HepG2 (cell line): ENCODE measurements at regions of chr9 and their contacts with region 1.

Region 1: DNA sequence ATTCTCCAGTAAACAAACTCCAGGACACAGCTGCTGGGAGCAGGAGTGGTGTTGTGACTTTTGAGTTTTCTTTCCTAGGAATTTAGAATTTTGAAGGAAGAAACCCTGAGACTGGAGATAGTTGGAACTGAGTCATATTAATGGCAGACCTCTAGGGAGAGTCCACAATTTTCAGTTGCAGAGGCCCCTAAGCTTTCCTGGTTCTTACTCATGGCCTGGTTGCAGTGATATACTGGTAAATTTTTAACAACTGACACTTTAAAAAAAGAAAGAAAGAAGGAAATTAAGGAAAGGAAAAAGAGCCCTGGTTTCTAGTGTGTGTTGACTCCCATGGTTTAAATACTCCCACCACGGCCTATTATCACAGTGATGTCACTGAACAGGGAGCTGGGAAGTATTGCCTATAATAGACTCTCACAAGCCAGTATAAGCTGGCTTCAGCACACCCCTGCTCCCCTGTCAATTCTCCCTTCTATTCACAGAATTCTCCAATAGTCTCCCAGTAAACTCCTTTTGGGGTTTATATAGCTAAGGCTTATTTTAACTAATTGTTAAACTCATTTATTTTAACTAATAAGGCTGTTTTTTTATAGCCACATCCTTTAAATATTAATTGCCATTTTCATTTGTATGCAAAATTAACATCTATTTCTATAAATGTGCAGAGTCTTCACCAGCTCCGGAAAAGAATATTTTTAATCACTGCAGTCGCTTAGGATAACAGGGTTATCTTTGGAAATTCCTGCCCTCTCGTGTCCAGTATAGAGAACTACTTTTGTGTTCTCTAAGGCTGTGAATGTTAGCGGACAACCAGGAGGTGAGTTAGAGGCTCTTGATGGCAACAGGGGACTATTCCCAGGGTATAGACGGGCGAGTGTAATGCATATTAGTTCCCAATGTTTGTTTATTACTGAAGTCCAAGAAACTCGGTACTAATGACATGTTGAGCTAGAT is 59.7 kb downstream of the GGTA1 start:
- DNase-seq: peak; percentile 39
- ATAC-seq: peak; percentile 96
- H3K4me3 ChIP-seq: no peak overlapping the region
- H3K27ac ChIP-seq: no peak overlapping the region
- H3K4me1 ChIP-seq: peaks cover 20% of the 10 kb centered on the region
- H3K27me3 ChIP-seq: peaks cover 1 to 14% of the 10 kb centered on the region in 2 experiments; a peak in 3 of 5 replicates
- CTCF ChIP-seq: peak; percentile 54
- EP300 ChIP-seq: no peak
- POLR2A ChIP-seq: no peak
- RAD21 ChIP-seq: no peak

Region 2: GRCh38 chr9:121383715-121384114 is 56.3 kb before region 1 on chr9:
- CTCF ChIA-PET with region 1: no interaction called
- POLR2A ChIA-PET with region 1: no interaction called
- in situ Hi-C with region 1: loop called (anchors 10 kb)
- intact Hi-C with region 1: no loop called
- DNase-seq: no peak
- ATAC-seq: no peak
- H3K4me3 ChIP-seq: no peak overlapping the region
- H3K27ac ChIP-seq: no peak overlapping the region
- H3K4me1 ChIP-seq: peaks cover 19% of the 10 kb centered on the region
- H3K27me3 ChIP-seq: peaks cover 0 to 1% of the 10 kb centered on the region in 2 experiments; a peak in 2 of 5 replicates
- CTCF ChIP-seq: no peak
- EP300 ChIP-seq: no peak
- POLR2A ChIP-seq: no peak
- RAD21 ChIP-seq: no peak